A549 (cell line): ENCODE measurements at regions of chr1 and their contacts with region 1.

Region 1: GRCh38 chr1:25608488-25609178 is 8.0 kb upstream of the MAN1C1 start:
- DNase-seq: peak; percentile 64
- ATAC-seq: peak; percentile 81 to 90; a peak in 5 of 6 replicates
- H3K4me3 ChIP-seq: no peak overlapping the region
- H3K27ac ChIP-seq: no peak overlapping the region
- H3K4me1 ChIP-seq: 0 out of 3 replicates have a peak, but pooled peaks cover 4% of the 10 kb centered on the region
- CTCF ChIP-seq: peak; percentile 50
- EP300 ChIP-seq: no peak
- POLR2A ChIP-seq: no peak
- RAD21 ChIP-seq: peak; percentile 59 to 64

Region 2: GRCh38 chr1:25648681-25649440 is 40.2 kb after region 1 on chr1:
- CTCF ChIA-PET with region 1: no interaction called
- POLR2A ChIA-PET with region 1: no interaction called
- DNase-seq: no peak
- ATAC-seq: no peak
- H3K4me3 ChIP-seq: no peak overlapping the region
- H3K27ac ChIP-seq: no peak overlapping the region
- H3K4me1 ChIP-seq: no peaks in the 10 kb centered on the region
- CTCF ChIP-seq: no peak
- EP300 ChIP-seq: no peak
- POLR2A ChIP-seq: no peak
- RAD21 ChIP-seq: no peak

Region 3: GRCh38 chr1:25810341-25811299 is 202.0 kb after region 1 on chr1:
- CTCF ChIA-PET with region 1: interaction called, 17 read pairs
- POLR2A ChIA-PET with region 1: no interaction called
- DNase-seq: peak; percentile 44 to 54
- ATAC-seq: peak; percentile 70 to 85
- H3K4me3 ChIP-seq: no peak overlapping the region
- H3K27ac ChIP-seq: no peak overlapping the region
- H3K4me1 ChIP-seq: no peaks in the 10 kb centered on the region
- CTCF ChIP-seq: peak; percentile 74
- EP300 ChIP-seq: no peak
- POLR2A ChIP-seq: no peak
- RAD21 ChIP-seq: peak; percentile 86 to 89